ENCODE measurements at regions of chr6 and their contacts with region 1.

Region 1: GRCh38 chr6:73503027-73503772 is 17.6 kb downstream of the EEF1A1 start:
- H3K4me3 Mint-ChIP-seq: no peak overlapping the region
- H3K27ac Mint-ChIP-seq: peak overlapping the region; percentile 51
- H3K4me1 Mint-ChIP-seq: peaks cover 5% of the 10 kb centered on the region
- H3K27me3 Mint-ChIP-seq: no peaks in the 10 kb centered on the region

Region 2: DNA sequence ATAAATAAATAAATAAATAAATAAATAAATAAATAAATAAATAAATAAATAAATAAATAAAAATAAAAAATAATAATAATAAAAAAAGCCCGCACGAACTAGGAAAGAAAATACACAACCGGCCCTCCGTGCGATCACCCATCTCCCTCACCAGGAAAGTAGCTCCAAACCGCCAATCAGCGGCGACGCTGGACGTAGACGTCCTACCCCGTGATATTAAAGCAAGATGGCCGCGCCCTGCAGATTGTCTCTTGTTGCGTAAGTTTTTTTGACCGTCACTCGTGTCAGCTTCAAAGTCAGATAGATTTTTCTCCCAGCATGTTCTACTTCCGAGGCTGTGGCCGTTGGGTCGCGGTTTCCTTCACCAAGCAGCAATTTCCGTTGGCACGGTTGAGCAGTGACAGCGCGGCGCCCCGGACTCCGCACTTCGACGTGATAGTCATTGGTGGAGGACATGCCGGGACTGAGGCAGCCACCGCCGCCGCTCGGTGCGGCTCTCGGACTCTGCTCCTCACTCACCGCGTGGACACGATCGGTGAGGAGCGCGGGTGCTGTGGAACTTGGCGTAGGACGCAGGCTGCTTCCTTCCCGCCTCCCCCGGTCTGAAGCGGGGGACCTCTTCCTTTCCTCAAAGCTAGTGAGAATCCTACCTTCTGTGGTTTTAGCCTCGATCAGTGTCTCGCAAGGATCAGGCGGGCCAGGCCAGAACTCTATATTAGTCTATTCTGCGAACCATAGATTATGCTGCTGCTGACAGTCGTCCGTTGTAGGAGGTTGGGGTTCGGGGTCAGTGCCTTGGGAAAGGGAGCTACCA is 41.5 kb before region 1 on chr6 and contains the start of gene MTO1:
- intact Hi-C with region 1: loop called (anchors 5 kb)
- H3K4me3 Mint-ChIP-seq: peak within 1 kb of the TSS; percentile 96
- H3K27ac Mint-ChIP-seq: peak within 1 kb of the TSS; percentile 95
- H3K4me1 Mint-ChIP-seq: peaks cover 39% of the 10 kb centered on the region
- H3K27me3 Mint-ChIP-seq: no peaks in the 10 kb centered on the region

Region 3: DNA sequence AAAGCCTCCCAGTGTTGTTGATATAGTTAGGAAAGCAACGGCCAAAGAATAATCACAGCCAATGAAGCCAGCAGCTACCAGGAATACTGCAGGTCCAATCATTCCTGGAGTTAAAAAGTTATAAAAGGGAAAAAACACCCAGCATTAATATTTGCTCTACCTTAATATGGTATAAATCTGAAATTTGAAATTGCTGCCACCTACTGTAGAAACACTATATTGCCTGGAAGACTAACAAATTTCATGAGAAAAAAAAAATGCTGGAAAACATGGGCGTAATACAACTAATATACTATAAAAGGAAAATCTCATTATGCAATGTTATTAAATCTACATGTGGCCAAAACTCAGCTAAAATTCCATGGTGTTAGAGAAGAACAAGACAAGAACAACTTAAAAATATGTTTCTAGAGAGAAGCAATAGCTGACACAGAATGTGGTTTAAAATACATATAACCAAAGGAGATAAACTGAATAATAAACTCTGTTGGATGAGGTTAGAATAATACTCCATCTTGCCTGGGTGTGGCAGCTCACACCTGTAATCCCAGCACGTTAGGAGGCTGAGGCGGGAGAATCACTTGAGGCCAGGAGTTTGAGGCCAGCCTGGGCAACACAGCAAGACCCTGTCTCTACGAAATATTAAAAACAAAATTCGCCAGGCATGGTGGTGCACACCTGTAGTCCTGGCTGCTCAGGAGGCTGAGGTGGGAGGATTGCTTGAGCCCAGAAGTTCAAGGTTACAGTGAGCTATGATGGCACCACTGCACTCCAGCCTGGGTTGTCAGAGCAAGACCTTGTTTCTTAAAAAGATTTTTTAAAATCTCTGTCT is 107.5 kb after region 1 on chr6:
- intact Hi-C with region 1: loop called (anchors 5 kb)
- H3K4me3 Mint-ChIP-seq: no peak overlapping the region
- H3K27ac Mint-ChIP-seq: no peak overlapping the region
- H3K4me1 Mint-ChIP-seq: no peaks in the 10 kb centered on the region
- H3K27me3 Mint-ChIP-seq: no peaks in the 10 kb centered on the region

Measured in dendritic cell treated with granulocyte-macrophage colony-stimulating factor and Interleukin-4, amounts not matched to agents 40 ng/mL and 50 ng/mL, for 4 days (primary cell).